Activated T-helper 2 cell treated with anti-CD3 and anti-CD28 coated beads, Interferon-gamma antibody, Interleukin-2, Interleukin-4, amounts not matched to agents 10 μg/mL and 5 μg/mL and 100 μg/mL, durations not matched to agents 14 hours and 24 hours and 36 hours (primary cell): ENCODE measurements at regions of chrX and their contacts with region 1.

Region 1: DNA sequence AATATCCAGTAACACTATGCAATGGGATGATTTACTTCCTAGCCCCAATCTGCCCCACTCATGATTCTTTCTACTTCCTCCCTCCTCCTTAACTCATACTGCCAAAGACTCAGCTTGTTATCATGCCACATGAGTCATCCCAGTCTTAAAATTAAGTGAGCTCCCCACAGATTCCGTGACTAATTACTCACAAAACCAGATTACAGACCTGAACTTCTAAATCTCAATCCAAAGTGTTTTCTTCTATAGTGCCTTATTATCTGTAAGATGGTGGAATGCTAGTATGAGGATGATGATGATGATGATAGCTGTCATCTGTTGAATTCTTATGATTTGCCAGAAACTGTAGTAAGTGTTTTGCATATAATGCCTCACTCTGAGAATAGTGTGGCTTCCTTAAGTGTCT is 27.7 kb upstream of the GPC3 start:
- DNase-seq: no peak
- H3K4me3 Mint-ChIP-seq: no peak overlapping the region
- H3K27ac Mint-ChIP-seq: no peak overlapping the region
- H3K4me1 Mint-ChIP-seq: peaks cover 12% of the 10 kb centered on the region
- H3K27me3 Mint-ChIP-seq: peaks cover 2% of the 10 kb centered on the region

Region 2: GRCh38 chrX:133574716-133575115 is 438.4 kb before region 1 on chrX:
- intact Hi-C with region 1: no loop called
- DNase-seq: no peak
- H3K4me3 Mint-ChIP-seq: no peak overlapping the region
- H3K27ac Mint-ChIP-seq: no peak overlapping the region
- H3K4me1 Mint-ChIP-seq: no peaks in the 10 kb centered on the region
- H3K27me3 Mint-ChIP-seq: no peaks in the 10 kb centered on the region

Region 3: DNA sequence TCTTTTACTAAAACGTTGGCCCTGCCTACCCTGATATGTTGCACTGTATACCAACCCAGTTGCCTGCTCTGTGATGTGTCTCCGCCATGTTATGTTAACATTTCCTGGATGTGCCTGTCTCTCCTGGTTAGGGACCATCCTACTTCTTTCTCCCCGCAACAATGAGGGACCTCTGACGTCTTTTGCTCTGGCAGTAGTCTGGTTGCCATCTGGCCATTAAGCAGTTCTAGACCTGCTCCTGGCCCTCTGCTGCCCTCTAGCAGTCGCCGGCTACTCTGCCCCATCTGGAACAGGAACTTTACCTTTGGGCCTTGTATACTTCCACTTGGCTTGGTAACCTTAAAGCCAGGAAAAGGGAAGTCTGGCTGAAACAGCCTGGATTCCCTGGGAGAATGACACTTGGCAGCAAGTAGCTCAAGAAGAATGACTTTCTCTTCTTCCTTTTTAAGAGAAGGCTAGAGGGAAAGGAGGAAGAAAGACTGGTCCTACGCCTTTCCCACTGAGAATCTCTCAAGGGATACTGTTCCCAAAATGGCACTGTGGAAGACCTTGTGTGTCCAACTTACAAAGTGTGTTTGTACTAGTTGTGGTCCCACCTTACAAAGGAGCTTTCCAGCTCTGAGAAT is 91.2 kb before region 1 on chrX:
- intact Hi-C with region 1: loop called (anchors 5 kb)
- DNase-seq: peak; percentile 9
- H3K4me3 Mint-ChIP-seq: no peak overlapping the region
- H3K27ac Mint-ChIP-seq: no peak overlapping the region
- H3K4me1 Mint-ChIP-seq: peaks cover 25% of the 10 kb centered on the region
- H3K27me3 Mint-ChIP-seq: no peaks in the 10 kb centered on the region